Activated B cell treated with CpG ODN at 0.5 μM for 24 hours (primary cell): ENCODE measurements at regions of chr5 and their contacts with region 1.

Region 1: DNA sequence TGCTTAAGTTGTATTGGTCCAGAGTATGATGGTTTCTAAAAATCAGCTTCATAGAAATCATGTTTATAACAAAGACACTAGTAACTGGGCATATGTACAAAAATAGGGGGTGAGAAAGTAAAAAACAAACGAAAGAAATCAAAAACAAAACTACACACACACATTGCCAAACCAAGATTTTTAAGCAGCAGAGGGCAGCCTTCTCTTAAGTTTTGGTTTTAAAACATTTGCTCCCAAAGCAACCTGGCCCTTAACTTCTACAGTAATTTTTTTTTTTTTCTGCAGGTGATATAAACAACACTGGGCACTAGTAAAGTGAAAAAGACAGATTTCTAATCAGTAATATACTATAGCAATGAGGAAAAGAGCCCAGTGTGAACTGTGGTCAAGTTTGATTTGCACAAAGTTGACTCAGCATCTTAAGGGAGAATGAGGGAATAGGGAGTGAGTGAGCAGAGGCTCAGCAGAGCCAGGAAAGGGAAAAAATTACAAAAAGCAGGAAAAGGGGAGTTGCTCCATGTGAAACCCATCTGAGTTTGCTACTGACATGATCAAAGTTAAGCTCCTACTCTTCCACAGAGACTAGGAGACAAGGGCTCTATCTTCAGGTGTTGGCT is 13.4 kb upstream of the GAPT start:
- DNase-seq: no peak
- ATAC-seq: peak; percentile 28
- H3K4me3 Mint-ChIP-seq: peak overlapping the region; percentile 4
- H3K27ac Mint-ChIP-seq: no peak overlapping the region
- H3K4me1 Mint-ChIP-seq: peaks cover 22% of the 10 kb centered on the region
- H3K27me3 Mint-ChIP-seq: no peaks in the 10 kb centered on the region
- CTCF ChIP-seq: peak; percentile 23

Region 2: DNA sequence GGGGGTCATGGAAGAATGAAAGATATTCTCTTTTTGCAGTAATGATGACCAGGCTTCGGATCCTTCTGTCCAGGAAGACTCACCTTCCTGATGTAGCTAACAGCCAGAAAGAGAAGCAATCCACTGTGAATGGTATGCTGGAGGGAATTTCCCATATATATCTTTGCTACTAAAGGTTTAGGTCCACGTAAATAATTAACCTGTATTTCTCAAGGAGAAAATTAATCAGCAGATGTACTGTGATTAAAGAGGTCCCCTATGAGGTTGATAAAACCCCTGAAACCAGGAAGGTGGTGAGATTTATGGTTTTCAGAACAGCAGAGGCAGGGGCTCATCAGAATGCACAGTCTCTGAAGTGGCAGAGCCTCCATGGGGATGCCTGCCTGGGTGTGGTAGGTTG is 93.6 kb after region 1 on chr5:
- CTCF ChIA-PET with region 1: interaction called, 24 read pairs
- POLR2A ChIA-PET with region 1: no interaction called
- intact Hi-C with region 1: no loop called
- DNase-seq: no peak
- ATAC-seq: no peak
- H3K4me3 Mint-ChIP-seq: no peak overlapping the region
- H3K27ac Mint-ChIP-seq: no peak overlapping the region
- H3K4me1 Mint-ChIP-seq: peaks cover 6% of the 10 kb centered on the region
- H3K27me3 Mint-ChIP-seq: no peaks in the 10 kb centered on the region
- CTCF ChIP-seq: no peak

Region 3: GRCh38 chr5:58813855-58814254 is 336.0 kb after region 1 on chr5:
- CTCF ChIA-PET with region 1: no interaction called
- POLR2A ChIA-PET with region 1: no interaction called
- intact Hi-C with region 1: loop called (anchors 1 kb)
- DNase-seq: no peak
- ATAC-seq: no peak
- H3K4me3 Mint-ChIP-seq: no peak overlapping the region
- H3K27ac Mint-ChIP-seq: no peak overlapping the region
- H3K4me1 Mint-ChIP-seq: no peaks in the 10 kb centered on the region
- H3K27me3 Mint-ChIP-seq: no peaks in the 10 kb centered on the region
- CTCF ChIP-seq: no peak

Region 4: GRCh38 chr5:58849921-58850667 is 372.2 kb after region 1 on chr5:
- CTCF ChIA-PET with region 1: interaction called, 260 read pairs
- POLR2A ChIA-PET with region 1: no interaction called
- intact Hi-C with region 1: loop called (anchors 1 kb)
- DNase-seq: no peak
- ATAC-seq: peak; percentile 64
- H3K4me3 Mint-ChIP-seq: no peak overlapping the region
- H3K27ac Mint-ChIP-seq: no peak overlapping the region
- H3K4me1 Mint-ChIP-seq: peaks cover 2% of the 10 kb centered on the region
- H3K27me3 Mint-ChIP-seq: no peaks in the 10 kb centered on the region
- CTCF ChIP-seq: peak; percentile 76